ENCODE measurements at regions of chr5 and their contacts with region 1.

Region 1: DNA sequence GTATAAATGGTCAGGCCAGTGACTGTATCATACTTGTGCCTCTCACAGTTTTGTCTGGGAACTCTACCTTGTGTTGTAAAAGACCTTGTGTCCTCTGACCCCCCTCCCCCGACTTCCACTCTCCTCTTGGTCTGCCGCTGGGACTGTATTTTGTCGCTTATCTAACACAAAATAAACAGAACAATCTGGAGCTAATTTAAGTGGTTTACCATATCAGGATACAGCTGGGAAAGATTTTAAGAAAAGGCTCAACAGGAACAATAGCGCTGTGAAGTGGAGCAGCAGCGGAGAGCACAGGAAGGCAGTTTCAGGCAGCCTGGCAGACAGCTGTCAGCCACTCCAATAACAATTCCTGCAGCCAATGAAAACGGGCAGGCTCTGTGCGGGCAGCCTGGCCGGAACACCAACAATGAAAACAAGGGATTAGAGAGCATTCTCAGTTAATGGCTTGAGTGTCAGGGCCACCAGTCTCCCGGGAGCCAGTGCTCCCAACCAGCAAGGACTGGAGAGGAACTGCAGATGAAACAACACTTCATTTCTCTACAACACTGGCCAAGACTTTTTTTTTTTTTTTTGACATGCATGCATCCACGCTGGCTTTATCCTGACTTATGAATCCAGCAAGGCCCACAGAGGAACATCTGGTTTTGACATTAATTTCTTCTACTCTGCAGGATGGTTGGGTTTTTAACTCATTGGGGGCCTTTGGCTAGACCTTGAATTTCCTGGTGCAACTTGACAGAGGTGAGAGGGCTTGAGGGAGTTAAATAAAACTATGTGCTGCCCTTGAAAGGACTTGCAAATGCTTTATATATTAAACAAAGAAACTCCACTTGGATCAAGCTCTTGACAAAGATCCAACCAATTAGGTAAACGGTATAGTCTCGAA is 76.7 kb downstream of the ARSB start:
- DNase-seq: peak; percentile 47 to 61
- H3K4me3 ChIP-seq: peak overlapping the region; percentile 16; the same call in 1 of the 2 replicates
- H3K4me3 Mint-ChIP-seq: peak overlapping the region; percentile 78
- H3K27ac Mint-ChIP-seq: peak overlapping the region; percentile 63
- H3K4me1 ChIP-seq: peaks cover 15% of the 10 kb centered on the region; the same call in 1 of the 2 replicates
- H3K4me1 Mint-ChIP-seq: peaks cover 11% of the 10 kb centered on the region
- H3K27me3 ChIP-seq: no peaks in the 10 kb centered on the region
- H3K27me3 Mint-ChIP-seq: no peaks in the 10 kb centered on the region
- CTCF ChIP-seq: no peak

Region 2: GRCh38 chr5:78841767-78842166 is 66.7 kb before region 1 on chr5:
- CTCF ChIA-PET with region 1: no interaction called
- POLR2A ChIA-PET with region 1: no interaction called
- intact Hi-C with region 1: no loop called
- DNase-seq: no peak
- H3K4me3 ChIP-seq: no peak overlapping the region
- H3K4me3 Mint-ChIP-seq: no peak overlapping the region
- H3K27ac Mint-ChIP-seq: no peak overlapping the region
- H3K4me1 ChIP-seq: no peaks in the 10 kb centered on the region
- H3K4me1 Mint-ChIP-seq: no peaks in the 10 kb centered on the region
- H3K27me3 ChIP-seq: no peaks in the 10 kb centered on the region
- H3K27me3 Mint-ChIP-seq: no peaks in the 10 kb centered on the region
- CTCF ChIP-seq: no peak

Region 3: GRCh38 chr5:78958672-78959445 is 50.4 kb after region 1 on chr5:
- CTCF ChIA-PET with region 1: no interaction called
- POLR2A ChIA-PET with region 1: no interaction called
- intact Hi-C with region 1: loop called (anchors 2 kb)
- DNase-seq: peak in 1 of 2 experiments; percentile 35
- H3K4me3 ChIP-seq: no peak overlapping the region
- H3K4me3 Mint-ChIP-seq: peak overlapping the region; percentile 12
- H3K27ac Mint-ChIP-seq: peak overlapping the region; percentile 91
- H3K4me1 ChIP-seq: peaks cover 16% of the 10 kb centered on the region
- H3K4me1 Mint-ChIP-seq: peaks cover 21% of the 10 kb centered on the region
- H3K27me3 ChIP-seq: no peaks in the 10 kb centered on the region
- H3K27me3 Mint-ChIP-seq: no peaks in the 10 kb centered on the region
- CTCF ChIP-seq: no peak

Region 4: GRCh38 chr5:79241535-79241979 is 333.1 kb after region 1 on chr5:
- CTCF ChIA-PET with region 1: no interaction called
- POLR2A ChIA-PET with region 1: no interaction called
- intact Hi-C with region 1: no loop called
- DNase-seq: no peak
- H3K4me3 ChIP-seq: no peak overlapping the region
- H3K4me3 Mint-ChIP-seq: no peak overlapping the region
- H3K27ac Mint-ChIP-seq: no peak overlapping the region
- H3K4me1 ChIP-seq: no peaks in the 10 kb centered on the region
- H3K4me1 Mint-ChIP-seq: peaks cover 7% of the 10 kb centered on the region
- H3K27me3 ChIP-seq: no peaks in the 10 kb centered on the region
- H3K27me3 Mint-ChIP-seq: no peaks in the 10 kb centered on the region
- CTCF ChIP-seq: no peak

Measured in Caco-2 (cell line).